Testis (tissue), 5 donors: ENCODE measurements at regions of chr6 and their contacts with region 1.

Region 1: GRCh38 chr6:108655806-108656651 is 95.3 kb downstream of the FOXO3 start:
- DNase-seq: peak; percentile 58
- H3K4me3 ChIP-seq: no peak overlapping the region
- H3K27ac ChIP-seq: peak overlapping the region; percentile 75 to 84
- H3K4me1 ChIP-seq: peaks cover 51% of the 10 kb centered on the region
- H3K27me3 ChIP-seq: no peaks in the 10 kb centered on the region
- CTCF ChIP-seq: no peak
- POLR2A ChIP-seq: no peak

Region 2: GRCh38 chr6:108592371-108593337 is 63.4 kb before region 1 on chr6:
- intact Hi-C with region 1: loop called (anchors 10 kb)
- DNase-seq: no peak
- H3K4me3 ChIP-seq: no peak overlapping the region
- H3K27ac ChIP-seq: peak overlapping the region; percentile 16 to 73
- H3K4me1 ChIP-seq: peaks cover 80% of the 10 kb centered on the region
- H3K27me3 ChIP-seq: no peaks in the 10 kb centered on the region
- CTCF ChIP-seq: no peak
- POLR2A ChIP-seq: no peak